HCT116 (cell line): ENCODE measurements at regions of chr21 and their contacts with region 1.

Region 1: GRCh38 chr21:36141513-36141925 is 6.6 kb downstream of the CBR3 start:
- DNase-seq: peak; percentile 98
- ATAC-seq: peak; percentile 99
- H3K4me3 ChIP-seq: peak overlapping the region in 1 of 2 experiments; percentile 28; a peak in 3 of 4 replicates
- H3K27ac ChIP-seq: peak overlapping the region; percentile 52
- H3K4me1 ChIP-seq: peaks cover 13 to 26% of the 10 kb centered on the region in 2 experiments
- H3K27me3 ChIP-seq: no peaks in the 10 kb centered on the region
- CTCF ChIP-seq: peak; percentile 75 to 94 (median 89)
- POLR2A ChIP-seq: no peak
- RAD21 ChIP-seq: peak; percentile 95

Region 2: DNA sequence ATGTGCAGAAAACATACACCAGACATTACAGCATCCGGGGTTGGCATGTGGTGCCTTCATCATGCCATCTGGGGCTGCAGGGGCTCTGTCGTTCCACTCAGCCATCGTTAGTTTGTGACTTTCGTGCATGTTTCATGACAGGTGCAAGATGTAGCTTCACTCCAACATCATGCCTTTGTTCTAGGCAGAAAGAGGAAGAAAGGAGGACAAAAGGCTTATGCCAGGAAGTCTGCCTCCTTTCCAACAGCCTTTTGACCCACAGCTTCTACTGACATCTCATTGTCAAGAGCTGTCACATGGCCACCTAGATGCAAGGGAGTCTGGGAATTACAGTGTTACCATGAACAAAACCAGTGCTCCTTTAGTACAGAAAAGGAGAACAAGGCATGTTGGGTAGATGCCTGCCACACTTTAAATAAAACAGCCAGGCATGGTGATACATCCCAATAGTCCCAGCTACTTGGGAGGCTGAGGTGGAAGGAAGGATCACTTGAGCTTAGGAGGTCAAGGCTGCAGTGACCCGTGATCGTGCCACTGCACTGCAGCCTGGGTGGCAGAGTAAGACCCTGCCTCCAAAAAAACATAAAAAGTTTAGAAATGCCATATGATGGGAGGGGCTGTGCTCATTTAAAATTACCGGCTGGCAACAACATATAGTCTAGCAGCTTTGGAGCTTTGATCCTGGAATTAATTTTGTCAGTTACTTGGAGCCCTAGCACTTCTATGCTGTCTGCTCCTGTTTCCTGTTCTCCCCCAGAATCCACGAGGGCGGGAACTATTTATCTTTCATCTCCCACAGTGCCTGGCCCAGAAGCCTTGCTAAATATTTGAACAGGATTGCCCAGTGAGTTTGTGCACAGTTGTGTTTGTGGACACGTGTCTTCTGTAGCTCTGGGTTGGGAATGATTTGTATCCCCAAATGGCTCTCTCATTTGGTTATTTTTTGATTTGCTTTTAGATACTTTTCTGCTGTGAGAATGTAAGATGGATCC is 22.5 kb after region 1 on chr21:
- CTCF ChIA-PET with region 1: no interaction called
- POLR2A ChIA-PET with region 1: no interaction called
- RAD21 ChIA-PET with region 1: no interaction called
- intact Hi-C with region 1: no loop called
- DNase-seq: no peak
- ATAC-seq: no peak
- H3K4me3 ChIP-seq: no peak overlapping the region
- H3K27ac ChIP-seq: no peak overlapping the region
- H3K4me1 ChIP-seq: peaks cover 6 to 11% of the 10 kb centered on the region in 2 experiments
- H3K27me3 ChIP-seq: no peaks in the 10 kb centered on the region
- CTCF ChIP-seq: no peak
- POLR2A ChIP-seq: no peak
- RAD21 ChIP-seq: no peak

Region 3: GRCh38 chr21:36330904-36331303 is 189.4 kb after region 1 on chr21:
- CTCF ChIA-PET with region 1: no interaction called
- POLR2A ChIA-PET with region 1: no interaction called
- RAD21 ChIA-PET with region 1: interaction called in 1 of 2 experiments, 4 read pairs
- intact Hi-C with region 1: loop called (anchors 2 kb)
- DNase-seq: peak; percentile 27
- ATAC-seq: peak; percentile 97
- H3K4me3 ChIP-seq: no peak overlapping the region
- H3K27ac ChIP-seq: no peak overlapping the region
- H3K4me1 ChIP-seq: peaks cover 4 to 8% of the 10 kb centered on the region in 2 experiments; a peak in 2 of 4 replicates
- H3K27me3 ChIP-seq: no peaks in the 10 kb centered on the region
- CTCF ChIP-seq: peak; percentile 51 to 74 (median 71); a peak in 5 of 6 replicates
- POLR2A ChIP-seq: no peak
- RAD21 ChIP-seq: peak; percentile 67

Region 4: GRCh38 chr21:36377391-36377842 is 235.9 kb after region 1 on chr21:
- CTCF ChIA-PET with region 1: no interaction called
- POLR2A ChIA-PET with region 1: no interaction called
- RAD21 ChIA-PET with region 1: no interaction called
- intact Hi-C with region 1: no loop called
- DNase-seq: no peak
- ATAC-seq: no peak
- H3K4me3 ChIP-seq: no peak overlapping the region
- H3K27ac ChIP-seq: no peak overlapping the region
- H3K4me1 ChIP-seq: peaks cover 5 to 9% of the 10 kb centered on the region in 2 experiments
- H3K27me3 ChIP-seq: no peaks in the 10 kb centered on the region
- CTCF ChIP-seq: no peak
- POLR2A ChIP-seq: no peak
- RAD21 ChIP-seq: no peak

Region 5: DNA sequence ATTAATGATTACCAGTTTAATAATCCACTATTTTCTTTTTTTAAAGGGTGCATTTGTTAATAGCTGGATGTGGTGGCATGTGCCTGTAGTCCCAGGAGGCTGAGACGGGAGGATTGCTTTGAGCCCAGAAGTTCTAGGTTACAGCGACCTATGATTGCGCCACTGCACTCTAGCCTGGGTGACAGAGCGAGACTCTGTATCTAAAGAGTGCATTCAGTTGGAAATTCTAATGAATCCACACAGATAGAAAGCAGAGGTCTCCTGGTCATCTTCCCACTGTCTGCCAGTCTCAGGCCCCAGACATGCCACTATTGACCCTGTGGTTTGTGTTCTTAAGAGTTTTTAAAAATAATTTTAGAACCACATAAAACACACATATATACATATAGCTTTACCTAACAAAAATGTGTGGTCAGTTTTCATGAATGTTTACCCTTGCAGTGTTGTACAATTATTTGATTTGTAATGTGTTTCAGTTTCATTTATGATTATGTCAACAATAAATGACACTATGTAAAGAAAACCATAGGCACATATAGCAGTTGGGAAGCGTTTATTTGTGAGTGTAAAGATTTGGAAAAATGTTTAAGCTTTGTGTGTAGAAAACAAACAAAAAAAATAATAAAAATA is 260.7 kb after region 1 on chr21:
- CTCF ChIA-PET with region 1: no interaction called
- POLR2A ChIA-PET with region 1: no interaction called
- RAD21 ChIA-PET with region 1: no interaction called
- intact Hi-C with region 1: no loop called
- DNase-seq: no peak
- ATAC-seq: no peak
- H3K4me3 ChIP-seq: no peak overlapping the region
- H3K27ac ChIP-seq: no peak overlapping the region
- H3K4me1 ChIP-seq: no peaks in the 10 kb centered on the region
- H3K27me3 ChIP-seq: no peaks in the 10 kb centered on the region
- CTCF ChIP-seq: no peak
- POLR2A ChIP-seq: no peak
- RAD21 ChIP-seq: no peak

Region 6: DNA sequence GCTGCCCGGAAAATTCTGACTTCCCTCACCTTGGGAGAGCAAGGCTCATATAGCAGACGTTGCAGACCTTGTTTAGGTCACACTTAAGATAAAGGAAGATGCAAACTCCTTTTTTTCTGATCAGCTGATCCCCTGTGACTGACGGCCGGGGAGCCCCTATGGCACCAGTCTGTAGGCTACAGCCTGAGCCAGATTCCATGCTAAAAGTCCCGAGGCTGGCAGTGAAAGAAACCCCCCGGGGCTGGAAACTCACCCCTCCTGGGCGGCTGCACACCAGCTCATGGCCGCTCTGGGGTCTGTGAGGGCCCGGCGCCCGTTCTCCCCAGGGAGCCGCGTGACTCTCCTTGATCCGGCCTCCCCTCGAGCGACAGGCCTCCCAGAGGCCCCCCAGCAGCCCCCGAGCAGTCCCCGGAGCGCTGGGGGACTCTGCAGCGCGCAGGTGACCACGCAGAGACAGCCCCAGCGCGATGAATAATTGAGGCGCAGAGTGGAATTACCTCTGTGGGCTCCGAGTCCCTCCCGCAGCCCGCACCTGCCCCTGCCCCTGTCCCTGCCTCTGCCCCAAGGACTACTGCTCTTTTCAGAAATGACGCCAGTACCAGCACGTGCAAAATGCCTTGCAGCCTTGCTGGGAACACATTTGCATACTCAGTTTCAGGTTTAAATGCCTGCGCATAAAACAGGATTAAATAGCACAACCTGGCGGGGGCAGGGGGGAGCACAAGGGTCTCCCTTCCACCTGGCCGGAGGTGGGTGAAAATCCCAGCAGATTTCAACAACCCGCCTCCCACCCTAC is 401.0 kb after region 1 on chr21:
- CTCF ChIA-PET with region 1: no interaction called
- POLR2A ChIA-PET with region 1: no interaction called
- RAD21 ChIA-PET with region 1: no interaction called
- intact Hi-C with region 1: no loop called
- DNase-seq: no peak
- ATAC-seq: no peak
- H3K4me3 ChIP-seq: no peak overlapping the region
- H3K27ac ChIP-seq: no peak overlapping the region
- H3K4me1 ChIP-seq: no peaks in the 10 kb centered on the region
- H3K27me3 ChIP-seq: peaks cover 45% of the 10 kb centered on the region
- CTCF ChIP-seq: no peak
- POLR2A ChIP-seq: no peak
- RAD21 ChIP-seq: no peak